Lower leg skin (tissue), 4 donors: ENCODE measurements at regions of chr11 and their contacts with region 1.

Region 1: DNA sequence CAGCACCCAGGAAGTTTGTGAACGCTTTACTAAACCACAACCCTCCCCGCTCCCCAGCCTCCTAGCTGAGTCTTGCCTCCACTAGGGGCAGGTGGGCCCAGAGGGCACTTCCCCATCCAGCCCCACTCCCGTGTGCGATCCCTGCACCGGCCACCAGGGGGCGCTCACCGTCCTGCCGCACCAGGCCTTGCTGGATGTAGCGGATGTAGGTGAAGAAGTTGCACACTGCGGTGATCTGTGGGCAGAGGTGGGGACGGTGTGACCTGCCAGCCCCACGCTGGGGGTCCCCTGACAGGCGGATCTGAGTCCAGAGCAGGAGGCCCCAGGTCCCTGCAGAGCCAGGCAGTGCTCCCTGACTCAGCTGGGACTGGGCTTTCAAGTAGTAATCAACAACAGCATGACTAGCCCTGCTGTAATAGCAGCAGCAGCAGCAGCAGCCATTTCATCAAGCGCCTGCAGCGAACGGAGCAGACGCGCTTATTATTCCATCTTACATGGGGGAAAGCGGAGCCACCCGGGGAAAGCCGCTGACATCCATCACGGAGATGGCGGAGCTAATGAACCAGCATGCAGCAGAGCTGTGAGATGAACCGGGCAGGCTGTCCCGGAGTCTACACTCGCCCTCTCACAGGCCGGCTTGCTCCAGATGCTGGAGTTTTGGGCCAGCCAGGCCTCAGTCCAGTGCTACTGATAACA is 7.9 kb upstream of the FADS3 start:
- DNase-seq: peak; percentile 67 to 97
- H3K4me3 ChIP-seq: no peak overlapping the region
- CTCF ChIP-seq: peak in 1 of 3 donors; percentile 97
- POLR2A ChIP-seq: no peak

Region 2: GRCh38 chr11:61947486-61948210 is 48.4 kb after region 1 on chr11:
- intact Hi-C with region 1: loop called (anchors 5 kb)
- DNase-seq: peak; percentile 92 to 98
- H3K4me3 ChIP-seq: no peak overlapping the region
- CTCF ChIP-seq: peak in 1 of 3 donors; percentile 80
- POLR2A ChIP-seq: no peak

Region 3: GRCh38 chr11:62081378-62082291 is 182.3 kb after region 1 on chr11:
- intact Hi-C with region 1: loop called (anchors 5 kb)
- DNase-seq: peak; percentile 69 to 97
- H3K4me3 ChIP-seq: no peak overlapping the region
- CTCF ChIP-seq: peak in 1 of 3 donors; percentile 88
- POLR2A ChIP-seq: no peak